OCI-LY7 (cell line): ENCODE measurements at regions of chr1 and their contacts with region 1.

Region 1: DNA sequence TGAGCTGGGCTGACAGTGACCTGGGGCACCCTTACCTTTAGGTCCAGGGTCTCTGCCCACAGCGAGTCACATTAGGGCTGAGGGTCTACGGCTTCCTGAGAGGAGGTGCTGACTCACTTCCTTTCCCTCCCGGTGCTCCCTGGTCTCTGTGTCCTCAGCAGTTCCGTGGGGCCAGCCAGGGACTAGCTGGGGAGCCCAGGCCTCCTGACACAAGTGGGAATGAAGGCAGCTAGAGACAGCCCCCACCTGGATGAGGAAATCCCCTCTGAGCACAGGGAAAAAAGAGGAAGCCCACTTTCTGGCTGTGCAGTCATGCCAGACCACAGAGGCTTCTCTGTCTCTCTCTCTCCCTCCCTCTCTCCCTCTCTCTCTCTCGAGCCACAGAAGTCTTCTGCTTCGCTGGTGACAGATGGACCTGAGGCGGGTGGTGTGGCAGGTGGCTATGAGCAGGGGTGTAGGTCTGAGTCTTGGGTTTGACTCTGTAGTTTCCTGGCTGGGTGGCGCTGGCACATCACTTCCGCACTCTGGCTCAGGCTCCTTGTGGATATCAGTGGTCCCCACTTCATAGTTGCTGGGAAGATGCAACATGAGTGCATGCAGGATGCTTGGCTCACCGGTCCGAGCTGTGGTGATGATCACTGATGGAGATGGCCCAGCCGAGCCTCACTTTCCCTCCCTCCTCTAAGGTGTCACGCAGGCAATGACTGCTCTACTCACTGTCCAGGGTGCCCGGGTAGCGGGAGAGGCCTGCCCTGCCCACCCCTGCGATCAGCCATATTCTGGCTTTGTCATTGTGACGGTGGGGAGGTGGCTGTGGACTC is 3.5 kb downstream of the SLC66A1 start:
- DNase-seq: peak; percentile 92
- H3K4me3 ChIP-seq: peak overlapping the region; percentile 82
- H3K27ac ChIP-seq: peak overlapping the region; percentile 91
- H3K4me1 ChIP-seq: peaks cover 61% of the 10 kb centered on the region
- CTCF ChIP-seq: no peak; the same call in 1 of the 2 replicates

Region 2: GRCh38 chr1:19251305-19252196 is 64.0 kb before region 1 on chr1 and contains the starts of genes EMC1 and MRTO4:
- CTCF ChIA-PET with region 1: no interaction called
- POLR2A ChIA-PET with region 1: no interaction called
- intact Hi-C with region 1: loop called (anchors 2 kb)
- DNase-seq: peak; percentile 88
- H3K4me3 ChIP-seq: peak within 1 kb of the TSS; percentile 99
- H3K27ac ChIP-seq: peak within 1 kb of the TSS; percentile 72
- H3K4me1 ChIP-seq: peaks cover 35% of the 10 kb centered on the region
- CTCF ChIP-seq: no peak
- total RNA-seq, gene EMC1: 35.2 and 41.3 TPM in 2 replicates
- total RNA-seq, gene MRTO4: 60.0 and 67.6 TPM in 2 replicates

Region 3: DNA sequence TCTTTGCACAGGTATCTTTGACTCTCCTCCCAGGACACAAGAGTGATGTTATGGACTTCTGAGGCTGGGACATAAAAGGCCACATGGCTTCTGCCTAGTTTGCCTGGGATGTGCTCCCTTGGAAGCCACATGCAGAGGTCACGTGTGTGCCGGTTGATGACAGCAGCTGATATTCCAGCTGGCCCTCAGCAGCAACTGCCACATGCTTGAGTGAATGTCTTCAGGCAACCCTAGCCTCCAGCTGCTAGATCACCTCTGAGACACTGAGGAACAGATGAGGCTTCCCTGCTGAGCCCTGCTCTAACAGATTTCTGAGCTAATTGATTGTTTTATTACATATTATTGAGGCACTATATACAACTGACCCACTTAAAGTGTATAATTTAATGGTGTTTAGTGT is 15.4 kb before region 1 on chr1:
- CTCF ChIA-PET with region 1: no interaction called
- POLR2A ChIA-PET with region 1: no interaction called
- intact Hi-C with region 1: no loop called
- DNase-seq: no peak
- H3K4me3 ChIP-seq: no peak overlapping the region
- H3K27ac ChIP-seq: no peak overlapping the region
- H3K4me1 ChIP-seq: no peaks in the 10 kb centered on the region
- CTCF ChIP-seq: no peak

Region 4: DNA sequence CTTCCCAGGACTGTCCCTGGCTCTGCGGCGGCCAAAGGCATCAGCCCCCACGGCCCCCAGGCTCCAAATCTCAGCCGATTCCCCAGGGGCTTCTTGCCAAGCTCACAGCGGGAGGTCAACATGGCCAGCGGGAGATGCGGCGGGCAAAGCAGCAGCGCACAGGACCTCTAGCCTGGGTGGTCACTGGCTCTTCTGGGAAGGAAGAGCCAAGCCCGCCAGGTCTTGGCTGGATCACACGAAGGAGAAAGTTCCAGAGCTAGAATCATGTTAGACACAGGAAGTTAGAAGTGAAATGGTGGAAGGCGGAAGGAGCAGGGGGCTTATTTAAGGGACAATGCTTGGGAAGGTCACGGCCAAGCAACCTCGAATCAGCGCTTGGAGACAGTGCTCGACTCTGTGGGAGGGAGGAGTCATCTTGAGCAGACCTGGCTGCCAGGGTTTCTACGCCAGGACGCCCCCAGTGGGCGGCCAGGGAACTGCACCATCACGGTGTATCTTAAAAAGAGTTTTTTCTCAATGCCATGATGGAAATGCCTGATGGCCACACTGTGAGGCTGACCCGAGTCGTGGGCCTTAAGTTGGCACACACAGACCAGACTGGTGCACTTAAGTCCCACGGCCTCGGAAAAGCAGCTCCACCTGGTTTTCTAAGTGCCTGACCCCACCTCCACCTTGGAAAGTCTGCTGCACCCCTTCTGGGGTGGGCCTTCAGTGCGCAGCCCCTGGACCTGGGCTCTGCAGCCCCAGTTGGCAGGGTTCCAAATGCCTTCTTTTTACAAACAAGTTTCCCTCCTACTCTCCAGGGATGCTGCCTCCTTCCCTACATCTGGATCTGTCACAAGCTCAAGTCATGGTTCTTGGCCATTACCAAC is 25.8 kb after region 1 on chr1:
- CTCF ChIA-PET with region 1: interaction called, 4 read pairs
- POLR2A ChIA-PET with region 1: no interaction called
- intact Hi-C with region 1: loop called (anchors 1 kb)
- DNase-seq: peak; percentile 75
- H3K4me3 ChIP-seq: no peak overlapping the region
- H3K27ac ChIP-seq: no peak overlapping the region
- H3K4me1 ChIP-seq: no peaks in the 10 kb centered on the region
- CTCF ChIP-seq: peak; percentile 88

Region 5: DNA sequence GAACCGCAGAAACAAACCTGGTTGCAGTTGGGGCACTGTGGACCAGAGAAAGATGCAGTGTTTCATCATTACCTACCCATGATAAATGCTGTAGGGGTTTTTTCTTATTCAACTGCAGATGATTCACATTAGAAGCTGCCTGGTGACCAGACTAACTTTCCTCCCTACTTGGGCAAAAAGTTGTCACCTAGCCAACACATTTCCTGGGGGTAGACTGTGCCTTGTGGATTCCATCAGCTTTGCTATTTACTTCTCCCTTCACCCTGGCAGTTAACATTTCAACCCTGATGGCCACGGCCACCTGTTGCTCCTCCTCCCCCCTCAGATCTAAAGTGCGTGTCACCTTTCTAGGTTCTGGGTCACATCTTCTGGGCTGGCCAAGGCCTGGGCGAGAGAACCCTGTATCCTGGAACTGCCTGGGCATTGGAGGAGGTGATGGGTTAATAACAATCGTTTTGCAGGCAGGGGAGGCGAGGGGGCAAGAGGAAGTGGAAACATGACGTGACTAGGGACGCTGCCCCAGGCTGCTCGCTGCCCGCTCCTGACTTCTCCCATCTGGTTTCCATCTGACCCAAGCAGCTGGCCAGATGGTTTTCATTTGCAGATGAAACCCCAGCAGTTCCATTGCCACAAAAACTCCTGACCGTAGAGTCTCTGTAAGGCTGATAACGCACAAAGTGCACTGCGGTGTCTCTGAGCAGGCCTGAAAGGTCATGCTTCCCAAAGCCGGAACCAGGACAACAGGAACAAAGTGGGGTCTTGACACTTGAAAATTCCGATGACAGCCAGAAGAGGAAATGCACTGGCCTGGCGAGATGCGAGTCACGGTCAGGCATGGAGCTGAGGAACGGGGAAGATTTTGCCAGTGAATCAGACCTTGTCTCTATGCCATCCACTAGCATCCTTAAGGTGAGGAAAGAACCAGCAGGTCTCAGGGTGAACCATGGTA is 133.2 kb after region 1 on chr1:
- CTCF ChIA-PET with region 1: no interaction called
- POLR2A ChIA-PET with region 1: no interaction called
- intact Hi-C with region 1: no loop called
- DNase-seq: no peak
- H3K4me3 ChIP-seq: no peak overlapping the region
- H3K27ac ChIP-seq: no peak overlapping the region
- H3K4me1 ChIP-seq: peaks cover 14% of the 10 kb centered on the region
- CTCF ChIP-seq: no peak